ENCODE measurements at regions of chr17 and their contacts with region 1.

Region 1: DNA sequence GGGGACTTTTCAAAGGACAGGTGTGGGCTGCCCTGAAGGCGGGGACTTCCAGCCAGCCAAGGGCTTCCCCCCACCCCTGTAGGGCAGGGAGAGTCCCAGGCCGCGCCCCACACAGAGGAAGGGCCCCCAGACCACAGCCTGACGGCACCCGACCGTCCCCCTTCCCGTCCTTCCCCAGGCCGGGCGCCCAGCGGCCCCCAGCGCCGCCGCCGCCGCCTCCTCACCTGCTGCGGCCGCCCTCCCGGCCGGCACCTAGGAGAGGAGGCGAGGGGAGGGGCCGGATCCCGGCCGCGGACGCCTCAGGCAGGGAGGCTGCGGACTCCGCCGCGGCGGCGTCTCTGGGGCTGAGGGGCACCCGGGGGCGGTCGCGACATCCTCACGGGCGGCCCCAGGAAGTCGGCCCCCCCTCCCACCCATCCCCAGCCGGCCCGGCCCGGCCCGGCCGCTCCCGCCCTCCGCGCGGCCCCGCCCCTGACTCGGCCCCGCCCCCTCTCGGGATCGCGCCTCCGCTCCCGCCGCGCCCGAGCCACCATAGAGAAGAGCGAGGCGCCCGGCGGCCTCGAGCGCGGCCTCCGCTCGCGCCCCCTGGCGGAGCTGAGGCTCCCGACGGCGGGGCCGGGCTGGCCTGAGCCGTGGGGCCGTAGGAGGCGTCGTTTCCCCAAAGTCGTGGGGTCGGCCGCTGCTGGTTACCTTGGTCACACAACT is 25.5 kb upstream of the RFFL start:
- DNase-seq: peak; percentile 93
- ATAC-seq: peak; percentile 84
- H3K4me3 Mint-ChIP-seq: peak overlapping the region; percentile 92
- H3K27ac Mint-ChIP-seq: peak overlapping the region; percentile 96
- H3K4me1 Mint-ChIP-seq: peaks cover 52% of the 10 kb centered on the region
- H3K27me3 Mint-ChIP-seq: no peaks in the 10 kb centered on the region

Region 2: DNA sequence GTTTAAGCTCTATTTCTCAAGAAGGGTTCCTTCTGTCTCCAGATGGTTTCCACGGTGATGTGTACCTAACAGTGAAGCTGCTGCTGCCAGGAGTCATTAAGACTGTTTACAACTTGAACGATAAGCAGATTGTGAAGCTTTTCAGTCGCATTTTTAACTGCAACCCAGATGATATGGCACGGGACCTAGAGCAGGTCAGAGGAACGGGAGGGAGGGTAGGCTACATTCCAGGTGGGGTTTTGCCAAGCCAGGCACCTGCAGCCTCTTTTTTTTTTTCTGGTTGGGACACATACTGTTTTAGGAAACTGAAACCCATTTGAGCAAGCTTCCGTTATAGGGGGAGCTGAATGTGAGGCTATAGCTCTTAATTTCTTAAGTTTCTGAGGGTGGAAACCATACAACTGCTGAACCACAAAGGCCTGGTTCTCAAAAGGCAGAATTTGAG is 98.1 kb before region 1 on chr17:
- CTCF ChIA-PET with region 1: interaction called, 18 read pairs
- DNase-seq: peak; percentile 56
- ATAC-seq: peak; percentile 74
- H3K4me3 Mint-ChIP-seq: peak overlapping the region; percentile 23
- H3K27ac Mint-ChIP-seq: peak overlapping the region; percentile 97
- H3K4me1 Mint-ChIP-seq: peaks cover 63% of the 10 kb centered on the region
- H3K27me3 Mint-ChIP-seq: no peaks in the 10 kb centered on the region

Region 3: GRCh38 chr17:34998205-34998604 is 90.8 kb before region 1 on chr17:
- CTCF ChIA-PET with region 1: interaction called, 18 read pairs
- DNase-seq: peak; percentile 87
- ATAC-seq: peak; percentile 98
- H3K4me3 Mint-ChIP-seq: no peak overlapping the region
- H3K27ac Mint-ChIP-seq: peak overlapping the region; percentile 52
- H3K4me1 Mint-ChIP-seq: peaks cover 13% of the 10 kb centered on the region
- H3K27me3 Mint-ChIP-seq: no peaks in the 10 kb centered on the region

Region 4: DNA sequence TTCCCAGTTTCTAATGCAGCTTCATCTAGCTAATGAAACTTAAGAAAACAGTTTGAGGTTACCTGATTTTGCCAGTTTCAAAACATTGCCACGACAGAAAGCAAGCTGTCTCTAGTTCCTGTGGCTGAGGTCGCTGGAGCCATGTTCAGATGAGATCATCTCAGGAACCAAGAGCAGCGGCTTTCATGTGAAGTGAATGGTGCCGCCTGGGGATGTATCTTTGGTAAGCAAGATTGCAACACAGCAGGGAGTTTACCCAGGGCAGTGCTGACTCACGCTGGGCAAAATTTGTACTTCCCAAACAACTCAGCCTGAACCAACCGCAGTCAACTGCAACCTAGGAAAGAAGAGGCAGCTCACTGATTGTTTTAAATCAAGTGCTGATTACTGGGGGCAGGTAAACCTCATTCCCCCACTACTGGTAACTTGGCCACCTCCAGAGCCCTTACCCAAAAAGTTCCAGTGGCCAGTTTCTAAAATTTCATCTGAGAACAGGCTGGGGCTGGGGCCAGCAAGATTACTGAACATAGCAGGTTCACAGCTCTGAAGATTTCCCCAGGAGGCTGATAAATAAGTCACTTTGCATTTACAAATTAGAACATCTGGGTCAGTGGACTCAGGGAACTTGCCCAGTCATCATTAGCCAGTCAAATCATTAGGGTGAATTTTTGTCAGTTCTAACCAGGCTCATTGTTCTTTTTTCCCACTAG is 25.4 kb before region 1 on chr17 and contains the start of gene RFFL:
- CTCF ChIA-PET with region 1: interaction called, 28 read pairs
- DNase-seq: peak; percentile 96
- ATAC-seq: peak; percentile 96
- H3K4me3 Mint-ChIP-seq: peak within 1 kb of the TSS; percentile 54
- H3K27ac Mint-ChIP-seq: peak within 1 kb of the TSS; percentile 91
- H3K4me1 Mint-ChIP-seq: peaks cover 62% of the 10 kb centered on the region
- H3K27me3 Mint-ChIP-seq: no peaks in the 10 kb centered on the region
- total RNA-seq, gene RFFL: 47.7 to 52.2 TPM

Region 5: DNA sequence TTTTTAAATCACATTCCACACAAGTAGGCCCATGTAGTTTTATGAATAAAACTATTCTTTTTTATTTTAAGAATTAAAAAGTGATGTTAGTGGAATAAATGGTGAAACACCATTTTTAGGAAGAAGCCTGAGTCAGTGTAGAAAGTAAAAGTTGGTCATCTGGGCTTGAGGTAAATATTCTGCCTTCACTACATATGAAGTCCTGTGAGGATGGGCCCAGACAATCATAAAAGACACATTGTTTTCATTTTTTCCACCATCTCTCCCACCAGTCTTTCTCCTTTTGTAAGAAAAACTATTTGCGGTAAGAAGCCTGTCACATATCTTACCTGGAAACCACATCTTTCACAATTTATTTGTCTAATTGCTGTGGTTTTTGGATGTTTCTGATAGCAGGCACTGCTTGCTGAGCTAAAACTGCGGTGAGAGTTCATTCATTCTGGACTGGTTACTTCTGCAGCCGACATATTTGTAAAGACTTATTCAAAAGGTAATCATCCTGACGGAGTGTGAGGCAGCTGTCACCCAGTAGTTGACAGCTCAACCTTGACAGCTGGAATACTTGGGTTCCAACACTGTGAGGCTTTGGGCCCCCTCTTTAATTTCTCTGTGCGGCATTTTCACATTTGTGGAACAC is 14.9 kb before region 1 on chr17:
- CTCF ChIA-PET with region 1: interaction called, 15 read pairs
- DNase-seq: no peak
- ATAC-seq: peak; percentile 28
- H3K4me3 Mint-ChIP-seq: peak overlapping the region; percentile 31
- H3K27ac Mint-ChIP-seq: peak overlapping the region; percentile 80
- H3K4me1 Mint-ChIP-seq: peaks cover 68% of the 10 kb centered on the region
- H3K27me3 Mint-ChIP-seq: no peaks in the 10 kb centered on the region

Region 6: DNA sequence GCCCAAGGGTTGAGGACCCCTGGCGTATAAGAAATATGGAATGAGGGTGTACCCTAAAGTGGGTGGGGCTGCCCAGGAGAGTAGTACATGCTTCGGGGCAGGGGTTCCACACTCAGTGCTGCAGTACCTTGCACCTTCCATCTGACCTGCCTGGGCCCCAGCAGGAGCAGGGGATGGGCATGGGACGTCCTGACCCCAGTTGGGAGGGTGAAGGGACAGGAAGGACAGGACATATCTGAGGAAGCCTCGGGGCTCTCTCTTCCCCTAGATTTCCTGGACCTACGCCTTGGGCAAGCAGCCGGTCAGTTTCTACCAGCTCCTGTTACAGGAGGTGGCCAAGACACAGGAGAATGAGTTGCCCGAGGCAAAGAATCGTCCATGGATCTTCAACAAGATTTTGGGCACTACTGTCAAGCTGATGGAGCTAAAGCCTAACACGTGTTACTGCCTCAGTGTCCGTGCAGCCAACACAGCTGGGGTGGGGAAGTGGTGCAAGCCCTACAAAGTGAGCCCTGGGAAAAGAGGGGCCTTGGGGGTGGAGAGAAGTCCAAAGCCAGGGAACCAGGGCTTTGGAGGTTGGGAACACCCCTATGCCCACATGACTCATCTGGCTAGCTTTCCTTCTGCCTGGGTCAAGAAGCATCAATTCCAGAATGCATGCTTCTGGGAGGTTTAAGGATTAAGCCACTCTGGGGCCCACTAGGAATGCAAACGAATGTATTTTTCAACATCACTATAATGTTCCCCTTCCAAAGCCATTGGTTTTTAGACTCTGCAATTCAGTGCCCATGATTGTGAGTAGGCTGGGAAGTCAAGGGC is 40.3 kb after region 1 on chr17:
- CTCF ChIA-PET with region 1: no interaction called
- DNase-seq: no peak
- ATAC-seq: no peak
- H3K4me3 Mint-ChIP-seq: no peak overlapping the region
- H3K27ac Mint-ChIP-seq: no peak overlapping the region
- H3K4me1 Mint-ChIP-seq: no peaks in the 10 kb centered on the region
- H3K27me3 Mint-ChIP-seq: no peaks in the 10 kb centered on the region

Measured in activated CD8-positive, alpha-beta memory T cell treated with anti-CD3 and anti-CD28 coated beads, Interleukin-2, amount 10 ng/mL, durations not matched to agents 7 days and 5 days (primary cell).